GM12878 (cell line): ENCODE measurements at regions of chr10 and their contacts with region 1.

Region 1: DNA sequence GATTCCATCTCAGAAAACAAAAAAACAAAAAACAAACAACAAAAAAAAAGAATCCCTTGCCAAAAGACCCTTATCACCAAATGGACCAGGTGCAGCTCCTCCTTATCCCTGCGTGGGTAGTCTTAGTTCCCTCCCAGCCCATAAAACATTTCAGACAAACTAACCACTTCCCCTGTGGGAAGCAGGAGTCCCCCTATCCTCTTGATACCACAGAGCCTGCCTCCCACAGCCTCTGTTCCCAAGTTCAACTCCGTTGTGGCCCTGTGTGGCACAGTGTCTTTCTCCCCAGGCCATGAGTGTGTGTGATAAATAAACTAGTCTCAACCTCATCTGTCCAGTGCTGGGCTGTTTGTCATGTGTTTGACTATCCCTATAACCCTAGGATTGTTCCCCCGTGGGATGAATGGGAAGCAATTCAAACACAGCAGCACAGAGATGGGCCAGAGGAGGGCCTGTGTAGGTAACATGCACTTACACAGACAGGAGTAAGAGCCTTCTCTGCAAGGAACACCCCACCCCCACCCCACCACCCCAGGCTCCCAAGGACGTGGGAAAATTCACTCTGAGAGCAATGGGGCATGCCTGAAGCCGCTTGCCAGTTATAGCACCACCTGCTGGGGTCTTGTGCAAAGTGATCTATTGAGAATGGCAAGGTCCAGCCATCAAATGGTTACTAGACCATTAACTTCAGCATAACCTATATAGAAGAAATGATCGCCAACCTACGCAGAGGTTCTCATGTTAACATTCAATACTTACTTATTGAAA is 147.1 kb upstream of the GHITM start:
- DNase-seq: peak; percentile 55
- ATAC-seq: peak; percentile 67
- H3K4me3 ChIP-seq: no peak overlapping the region
- H3K27ac ChIP-seq: peak overlapping the region; percentile 22
- H3K4me1 ChIP-seq: peaks cover 25% of the 10 kb centered on the region
- H3K27me3 ChIP-seq: no peaks in the 10 kb centered on the region; a peak in 1 of 4 replicates
- CTCF ChIP-seq: peak; percentile 60 to 66 (median 63)
- EP300 ChIP-seq: no peak
- POLR2A ChIP-seq: no peak
- RAD21 ChIP-seq: peak; percentile 55

Region 2: DNA sequence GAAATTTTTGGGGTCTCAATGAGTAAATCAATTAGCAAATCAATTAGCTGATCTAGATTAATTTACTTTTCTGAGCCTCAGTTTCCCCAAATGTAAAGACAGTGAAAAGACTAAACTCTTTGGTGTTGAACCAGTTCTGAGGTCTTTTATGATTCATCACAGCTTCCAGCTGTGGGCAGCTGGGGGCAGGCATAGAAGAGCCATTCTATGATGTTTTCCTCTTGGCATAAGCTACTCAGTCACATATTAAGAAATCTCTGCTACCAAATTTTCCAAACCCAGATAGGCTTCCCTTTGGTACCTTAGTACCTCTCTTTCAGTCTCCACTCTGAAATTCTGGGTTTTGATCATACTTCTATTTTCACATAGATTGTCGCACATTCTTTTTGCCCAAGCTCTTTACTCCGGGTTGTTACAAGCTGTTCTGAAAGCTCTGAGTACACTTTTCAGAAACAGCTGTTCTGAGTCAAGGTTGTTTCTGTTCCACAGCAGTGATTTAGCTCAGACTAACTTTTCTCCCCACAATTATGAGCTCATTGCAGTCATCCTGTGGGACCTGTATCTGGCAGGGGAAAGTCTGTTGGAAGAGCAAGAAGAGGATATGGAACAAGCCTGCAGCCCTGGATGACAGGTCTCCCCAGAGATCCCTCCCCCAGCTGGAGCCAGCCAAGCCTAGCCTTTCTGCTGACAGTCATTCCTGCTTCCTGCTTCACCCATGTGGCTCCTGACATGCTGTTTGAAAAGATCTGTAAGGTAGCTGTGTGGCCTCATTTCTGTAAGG is 452.5 kb before region 1 on chr10:
- CTCF ChIA-PET with region 1: no interaction called
- POLR2A ChIA-PET with region 1: no interaction called
- RAD21 ChIA-PET with region 1: no interaction called
- SMC1A ChIA-PET with region 1: no interaction called
- in situ Hi-C with region 1: no loop called
- intact Hi-C with region 1: loop called (anchors 10 kb)
- DNase-seq: peak; percentile 74
- ATAC-seq: peak; percentile 75
- H3K4me3 ChIP-seq: no peak overlapping the region
- H3K27ac ChIP-seq: peak overlapping the region; percentile 70
- H3K4me1 ChIP-seq: peaks cover 31% of the 10 kb centered on the region
- H3K27me3 ChIP-seq: no peaks in the 10 kb centered on the region
- CTCF ChIP-seq: no peak
- EP300 ChIP-seq: no peak
- POLR2A ChIP-seq: no peak
- RAD21 ChIP-seq: peak; percentile 15; the same call in 1 of the 2 replicates

Region 3: DNA sequence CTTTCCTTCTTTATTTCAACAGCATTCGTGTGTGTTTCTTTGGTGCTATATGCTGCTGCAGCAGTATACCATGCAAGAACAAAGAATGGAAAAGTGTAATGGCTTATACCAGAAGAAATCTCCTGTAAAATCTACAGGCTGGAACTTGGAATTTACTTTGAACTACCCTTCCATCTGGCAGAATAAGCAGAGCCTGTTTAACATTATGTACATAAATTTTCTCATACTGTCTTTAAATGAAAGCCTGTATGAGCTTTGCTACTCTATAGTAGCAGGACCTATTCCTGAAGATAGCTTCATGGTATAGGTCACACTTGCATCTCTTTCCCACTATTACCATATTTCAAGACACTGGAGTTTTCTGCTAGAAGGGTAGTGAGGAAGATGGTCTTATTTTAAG is 375.0 kb before region 1 on chr10:
- CTCF ChIA-PET with region 1: no interaction called
- POLR2A ChIA-PET with region 1: no interaction called
- RAD21 ChIA-PET with region 1: no interaction called
- SMC1A ChIA-PET with region 1: no interaction called
- in situ Hi-C with region 1: no loop called
- intact Hi-C with region 1: no loop called
- DNase-seq: no peak
- ATAC-seq: no peak
- H3K4me3 ChIP-seq: no peak overlapping the region
- H3K27ac ChIP-seq: no peak overlapping the region
- H3K4me1 ChIP-seq: no peaks in the 10 kb centered on the region
- H3K27me3 ChIP-seq: no peaks in the 10 kb centered on the region
- CTCF ChIP-seq: no peak
- EP300 ChIP-seq: no peak
- POLR2A ChIP-seq: no peak
- RAD21 ChIP-seq: no peak

Region 4: GRCh38 chr10:83801983-83802382 is 190.2 kb before region 1 on chr10:
- CTCF ChIA-PET with region 1: no interaction called
- POLR2A ChIA-PET with region 1: no interaction called
- RAD21 ChIA-PET with region 1: no interaction called
- SMC1A ChIA-PET with region 1: no interaction called
- in situ Hi-C with region 1: no loop called
- intact Hi-C with region 1: loop called (anchors 5 kb)
- DNase-seq: no peak
- ATAC-seq: no peak
- H3K4me3 ChIP-seq: no peak overlapping the region
- H3K27ac ChIP-seq: no peak overlapping the region
- H3K4me1 ChIP-seq: no peaks in the 10 kb centered on the region
- H3K27me3 ChIP-seq: no peaks in the 10 kb centered on the region
- CTCF ChIP-seq: peak; percentile 10 to 28 (median 26); a peak in 2 of 6 replicates
- EP300 ChIP-seq: no peak
- POLR2A ChIP-seq: no peak
- RAD21 ChIP-seq: peak; percentile 35; the same call in 1 of the 2 replicates

Region 5: DNA sequence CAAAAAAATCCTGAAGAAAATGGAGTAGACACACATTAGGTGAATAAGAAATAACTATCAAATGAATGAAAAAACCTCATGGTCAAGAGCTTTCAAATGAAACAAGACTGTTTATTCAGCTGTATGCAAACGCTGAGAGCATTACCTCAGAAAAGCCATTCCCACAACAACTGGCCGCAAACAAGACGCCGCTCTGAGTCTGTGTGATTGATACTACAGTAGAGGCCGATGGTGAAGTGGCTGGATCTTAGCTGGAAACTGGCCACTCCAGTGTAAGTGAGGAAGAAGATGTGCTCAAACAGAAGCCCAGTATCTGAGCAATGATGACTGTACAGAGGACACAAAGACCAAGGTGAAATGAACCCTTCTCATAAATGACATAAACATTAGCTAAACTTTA is 105.3 kb before region 1 on chr10:
- CTCF ChIA-PET with region 1: no interaction called
- POLR2A ChIA-PET with region 1: no interaction called
- RAD21 ChIA-PET with region 1: no interaction called
- SMC1A ChIA-PET with region 1: no interaction called
- in situ Hi-C with region 1: no loop called
- intact Hi-C with region 1: loop called (anchors 5 kb)
- DNase-seq: no peak
- ATAC-seq: no peak
- H3K4me3 ChIP-seq: no peak overlapping the region
- H3K27ac ChIP-seq: no peak overlapping the region
- H3K4me1 ChIP-seq: no peaks in the 10 kb centered on the region
- H3K27me3 ChIP-seq: no peaks in the 10 kb centered on the region
- CTCF ChIP-seq: no peak
- EP300 ChIP-seq: no peak
- POLR2A ChIP-seq: no peak
- RAD21 ChIP-seq: no peak

Region 6: DNA sequence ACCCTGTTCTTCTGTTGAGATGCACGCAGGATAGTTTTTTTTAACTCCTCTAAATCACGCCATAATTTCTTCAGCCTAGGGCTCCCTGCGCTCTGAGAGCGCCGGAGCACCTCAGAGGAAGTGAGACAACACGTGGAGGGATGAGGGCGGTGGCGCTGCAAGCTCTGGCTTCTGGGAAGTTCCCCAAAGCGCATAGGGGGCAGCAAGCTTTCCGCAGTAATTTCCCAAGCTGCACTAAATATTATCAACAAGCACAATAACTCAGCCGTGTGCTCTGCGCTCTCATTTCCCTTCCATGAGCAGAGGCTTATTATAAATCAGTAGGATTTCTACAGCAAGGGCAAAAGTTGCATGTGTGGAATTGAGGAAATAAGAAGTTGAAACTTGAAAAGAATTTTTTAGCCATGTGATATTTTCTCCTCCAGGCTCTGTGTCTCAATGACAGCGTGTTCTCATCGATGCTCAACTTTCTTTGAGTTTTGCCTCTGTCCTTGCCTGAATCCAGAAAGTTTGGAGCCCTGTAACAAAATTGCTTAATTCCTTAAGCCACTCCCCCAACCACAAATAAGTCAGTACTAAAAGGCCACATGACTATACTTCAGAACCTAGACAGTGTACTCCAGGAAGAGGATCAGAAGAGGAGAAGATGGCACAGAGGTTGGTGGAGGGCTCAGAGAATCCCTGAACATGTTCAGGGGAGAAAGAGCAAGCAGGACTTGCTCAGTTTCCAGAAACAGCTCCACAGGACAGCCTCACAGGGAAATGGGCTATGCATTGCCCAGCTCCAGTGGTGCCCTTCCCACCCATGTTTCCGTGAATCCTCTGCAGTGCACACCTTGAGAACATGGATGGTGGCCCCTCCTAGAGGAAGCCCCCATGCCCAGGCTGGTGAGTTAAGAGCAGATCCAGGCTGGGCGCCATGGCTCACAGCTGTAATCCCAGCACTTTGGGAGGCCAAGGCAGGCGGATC is 74.3 kb before region 1 on chr10:
- CTCF ChIA-PET with region 1: no interaction called
- POLR2A ChIA-PET with region 1: no interaction called
- RAD21 ChIA-PET with region 1: no interaction called
- SMC1A ChIA-PET with region 1: no interaction called
- in situ Hi-C with region 1: no loop called
- intact Hi-C with region 1: loop called (anchors 5 kb)
- DNase-seq: peak; percentile 32
- ATAC-seq: peak; percentile 93
- H3K4me3 ChIP-seq: no peak overlapping the region
- H3K27ac ChIP-seq: no peak overlapping the region
- H3K4me1 ChIP-seq: peaks cover 4% of the 10 kb centered on the region
- H3K27me3 ChIP-seq: no peaks in the 10 kb centered on the region; a peak in 1 of 4 replicates
- CTCF ChIP-seq: peak; percentile 22 to 40 (median 30); a peak in 4 of 6 replicates
- EP300 ChIP-seq: no peak
- POLR2A ChIP-seq: no peak
- RAD21 ChIP-seq: peak; percentile 13; the same call in 1 of the 2 replicates

Region 7: GRCh38 chr10:84333864-84334451 is 341.8 kb after region 1 on chr10:
- CTCF ChIA-PET with region 1: no interaction called
- POLR2A ChIA-PET with region 1: no interaction called
- RAD21 ChIA-PET with region 1: no interaction called
- SMC1A ChIA-PET with region 1: no interaction called
- in situ Hi-C with region 1: no loop called
- intact Hi-C with region 1: no loop called
- DNase-seq: no peak
- ATAC-seq: peak; percentile 64
- H3K4me3 ChIP-seq: no peak overlapping the region
- H3K27ac ChIP-seq: no peak overlapping the region
- H3K4me1 ChIP-seq: peaks cover 19% of the 10 kb centered on the region
- H3K27me3 ChIP-seq: no peaks in the 10 kb centered on the region
- CTCF ChIP-seq: no peak
- EP300 ChIP-seq: no peak
- POLR2A ChIP-seq: no peak
- RAD21 ChIP-seq: no peak